MCF 10A (cell line): ENCODE measurements at regions of chr1 and their contacts with region 1.

Region 1: DNA sequence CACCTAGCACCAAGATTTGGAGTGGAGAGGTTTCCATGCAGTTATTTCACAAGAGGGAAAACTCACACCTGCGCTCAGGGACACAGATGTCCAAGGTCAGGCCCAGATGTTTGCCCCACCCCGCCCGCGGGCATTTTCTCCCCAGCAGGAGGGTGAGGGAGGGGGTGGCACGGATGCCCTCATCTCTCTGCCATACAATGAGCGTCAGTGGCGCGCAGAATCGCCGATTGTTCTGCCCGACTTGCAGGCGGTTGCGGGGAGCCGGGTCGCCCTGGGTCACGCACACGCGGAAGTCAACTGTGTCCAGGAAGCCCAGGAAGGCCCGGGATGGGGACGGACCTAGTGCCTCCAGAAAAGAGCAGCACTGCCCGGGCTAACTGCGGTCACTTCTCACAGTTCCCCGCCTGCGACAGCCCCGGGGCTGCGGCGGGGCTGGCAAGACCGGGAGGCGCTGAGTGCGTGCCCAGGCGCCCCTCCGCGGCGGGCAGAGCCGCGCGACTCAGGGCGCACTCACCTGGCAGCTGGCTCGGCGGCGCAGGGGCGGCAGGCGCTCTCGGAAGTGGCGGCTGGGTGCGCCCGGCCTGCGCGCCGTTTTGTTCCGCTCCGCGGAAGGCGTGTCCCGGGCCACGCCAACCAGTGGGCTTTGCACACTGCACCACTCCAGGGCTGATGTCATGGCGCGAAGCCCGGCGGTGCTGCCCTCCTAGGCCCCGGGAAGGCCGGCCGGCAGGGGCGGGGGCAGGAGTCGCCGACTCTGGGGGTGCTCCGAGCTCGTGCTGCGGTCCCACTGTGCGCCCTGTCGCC is at the start of gene CSRP1:
- DNase-seq: peak; percentile 89
- H3K4me3 Mint-ChIP-seq: peak within 1 kb of the TSS; percentile 79
- H3K27ac Mint-ChIP-seq: peak within 1 kb of the TSS; percentile 86
- H3K4me1 Mint-ChIP-seq: peaks cover 54% of the 10 kb centered on the region
- H3K27me3 Mint-ChIP-seq: no peaks in the 10 kb centered on the region
- CTCF ChIP-seq: no peak
- total RNA-seq, gene CSRP1: 263 and 358 TPM in 2 replicates

Region 2: GRCh38 chr1:201456499-201457309 is 50.1 kb before region 1 on chr1:
- CTCF ChIA-PET with region 1: interaction called, 3,816 read pairs
- POLR2A ChIA-PET with region 1: interaction called, 227 read pairs
- intact Hi-C with region 1: no loop called
- DNase-seq: peak; percentile 97
- H3K4me3 Mint-ChIP-seq: no peak overlapping the region
- H3K27ac Mint-ChIP-seq: peak overlapping the region; percentile 67
- H3K4me1 Mint-ChIP-seq: peaks cover 49% of the 10 kb centered on the region
- H3K27me3 Mint-ChIP-seq: no peaks in the 10 kb centered on the region
- CTCF ChIP-seq: no peak

Region 3: DNA sequence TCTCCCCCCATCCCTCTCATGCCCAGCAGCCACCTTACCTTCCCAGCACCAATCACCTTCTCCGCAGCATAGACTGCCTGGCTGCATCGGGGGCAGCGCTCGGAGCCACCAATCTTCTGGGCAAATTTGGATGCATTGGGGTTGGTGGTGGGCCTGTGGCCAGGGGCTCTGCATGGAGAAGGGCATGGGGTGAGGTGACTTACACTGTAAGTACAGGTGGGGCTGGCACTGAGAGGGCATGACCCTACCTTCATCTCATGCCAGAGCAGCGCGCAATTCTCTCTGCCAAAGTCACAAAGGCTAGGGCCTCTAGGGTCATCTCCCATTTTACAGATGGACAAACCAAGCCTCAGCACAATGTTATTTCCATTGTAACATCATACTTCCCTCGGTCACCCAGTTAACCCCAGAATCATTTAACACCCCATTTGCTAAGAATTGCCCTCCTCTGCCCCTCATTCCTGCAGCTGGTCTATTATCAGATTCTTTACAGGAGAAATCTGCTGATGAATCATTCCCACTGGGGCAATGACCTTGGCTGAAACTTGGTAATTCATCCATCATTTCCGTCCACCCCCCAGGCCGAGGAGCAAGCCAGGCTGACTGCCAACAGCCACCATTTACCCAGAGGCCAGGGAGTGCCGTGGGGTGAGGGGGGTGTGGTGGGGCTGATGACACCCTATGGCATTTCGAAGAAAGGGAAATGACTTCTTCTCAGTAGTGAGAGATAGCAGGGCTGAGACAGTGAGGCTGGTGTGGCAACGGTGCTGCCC is 17.8 kb before region 1 on chr1:
- CTCF ChIA-PET with region 1: interaction called, 3,816 read pairs
- POLR2A ChIA-PET with region 1: interaction called, 330 read pairs
- intact Hi-C with region 1: loop called (anchors 1 kb)
- DNase-seq: peak; percentile 100
- H3K4me3 Mint-ChIP-seq: peak overlapping the region; percentile 40
- H3K27ac Mint-ChIP-seq: peak overlapping the region; percentile 95
- H3K4me1 Mint-ChIP-seq: peaks cover 54% of the 10 kb centered on the region
- H3K27me3 Mint-ChIP-seq: no peaks in the 10 kb centered on the region
- CTCF ChIP-seq: no peak